Esophagus squamous epithelium (tissue), 5 donors: ENCODE measurements at regions of chr18 and their contacts with region 1.

Region 1: GRCh38 chr18:59459369-59460079 is 100.5 kb upstream of the LMAN1 start:
- DNase-seq: no peak
- H3K4me3 ChIP-seq: no peak overlapping the region
- H3K27ac ChIP-seq: no peak overlapping the region
- H3K4me1 ChIP-seq: peaks cover 0 to 6% (median 5%) of the 10 kb centered on the region in 3 donors
- H3K27me3 ChIP-seq: peaks cover 0 to 11% (median 0%) of the 10 kb centered on the region in 4 donors
- CTCF ChIP-seq: peak; percentile 16 to 73 (median 52)
- POLR2A ChIP-seq: no peak

Region 2: DNA sequence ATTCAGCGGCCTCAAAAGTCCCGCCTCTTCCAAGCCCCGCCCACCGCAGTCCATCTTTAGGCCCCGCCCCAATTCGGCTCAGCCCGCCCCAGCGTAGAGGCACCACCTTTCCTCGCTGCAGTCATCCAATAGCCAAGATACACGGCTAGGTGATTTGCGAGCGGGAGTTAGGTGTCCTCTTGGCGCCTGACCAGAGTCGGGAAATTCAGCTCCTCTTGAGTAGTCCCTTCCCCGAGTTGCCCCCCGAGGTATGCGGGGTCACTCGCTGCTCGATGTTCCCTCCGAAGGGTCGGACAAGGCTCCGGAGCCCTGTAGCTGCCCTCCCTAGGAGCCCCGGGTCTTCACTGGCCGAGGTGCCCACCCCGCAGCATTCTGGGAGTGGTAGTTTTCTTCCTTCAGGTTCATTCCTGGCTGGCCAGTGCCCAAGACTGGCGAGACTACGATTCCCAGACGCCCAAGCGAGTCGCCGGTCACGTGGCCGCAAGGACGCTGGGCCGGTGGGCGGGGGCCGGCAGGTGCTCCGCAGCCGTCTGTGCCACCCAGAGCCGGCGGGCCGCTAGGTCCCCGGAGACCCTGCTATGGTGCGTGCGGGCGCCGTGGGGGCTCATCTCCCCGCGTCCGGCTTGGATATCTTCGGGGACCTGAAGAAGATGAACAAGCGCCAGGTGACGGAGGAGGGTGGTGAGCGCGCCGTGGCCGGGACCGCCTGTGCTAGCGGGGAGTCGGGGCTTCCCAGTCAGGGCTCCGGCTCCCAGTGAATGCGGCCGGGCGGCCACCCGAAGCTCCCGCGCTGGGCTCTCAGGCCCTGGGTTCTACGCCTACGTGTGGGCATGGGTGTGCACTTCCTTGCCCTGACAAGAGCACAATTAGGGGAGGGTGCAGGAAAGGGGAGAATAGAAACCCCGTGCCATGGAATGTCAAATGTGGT is 319.9 kb before region 1 on chr18 and contains the start of gene SEC11C:
- intact Hi-C with region 1: no loop called
- DNase-seq: peak; percentile 78
- H3K4me3 ChIP-seq: peak within 1 kb of the TSS; percentile 83 to 94 (median 90)
- H3K27ac ChIP-seq: peak within 1 kb of the TSS; percentile 83 to 92 (median 86)
- H3K4me1 ChIP-seq: peaks cover 10 to 25% (median 14%) of the 10 kb centered on the region in 3 donors
- H3K27me3 ChIP-seq: peaks cover 0 to 10% (median 0%) of the 10 kb centered on the region in 4 donors
- CTCF ChIP-seq: no peak
- POLR2A ChIP-seq: peak in 1 of 4 donors; percentile 60
- total RNA-seq, gene SEC11C: 29.6 to 61.8 (median 31.7) TPM

Region 3: DNA sequence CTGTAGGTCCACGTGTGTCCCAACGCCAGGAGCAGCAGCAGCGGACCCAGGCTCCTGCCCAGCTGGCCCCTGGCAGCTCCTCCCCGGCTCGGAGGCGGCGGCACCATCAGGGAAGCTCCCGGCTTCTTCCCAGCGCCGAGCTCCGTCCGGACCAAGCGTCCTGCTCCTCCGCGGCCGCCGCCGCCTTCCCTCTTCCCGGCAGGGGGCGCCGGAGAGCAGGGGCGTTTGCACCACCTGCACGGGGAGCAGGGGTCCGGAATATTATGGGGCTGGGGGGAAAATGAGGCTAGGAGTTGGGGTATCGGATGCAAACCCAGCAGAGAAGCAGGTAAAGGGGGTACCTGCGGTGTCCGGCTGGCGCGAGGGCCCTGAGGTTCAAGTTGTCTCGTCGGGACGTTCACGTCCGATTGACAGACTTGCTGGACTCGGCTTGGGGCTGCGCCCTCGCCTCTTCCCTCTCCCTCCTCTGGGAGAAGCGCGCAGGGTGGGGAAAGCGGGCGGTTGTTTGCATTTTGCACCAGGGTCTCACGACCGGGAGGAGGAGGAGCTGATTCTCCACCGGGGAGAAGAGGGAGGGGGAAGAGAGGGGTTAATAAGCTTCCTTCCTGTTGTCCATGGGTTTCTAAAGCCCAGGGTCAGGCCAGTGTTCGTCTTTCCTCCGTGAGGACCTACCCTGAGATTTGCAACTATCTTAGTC is 237.9 kb after region 1 on chr18 and contains the start of gene CCBE1:
- intact Hi-C with region 1: loop called (anchors 10 kb)
- DNase-seq: no peak
- H3K4me3 ChIP-seq: peak within 1 kb of the TSS; percentile 37 to 70 (median 49)
- H3K27ac ChIP-seq: peak within 1 kb of the TSS in 3 of 4 donors; percentile 9 to 60 (median 30)
- H3K4me1 ChIP-seq: peaks cover 0 to 51% (median 17%) of the 10 kb centered on the region in 3 donors
- H3K27me3 ChIP-seq: peaks cover 0 to 56% (median 0%) of the 10 kb centered on the region in 4 donors
- CTCF ChIP-seq: peak; percentile 37 to 90 (median 76)
- POLR2A ChIP-seq: no peak
- total RNA-seq, gene CCBE1: 0.34 to 4.6 (median 1.3) TPM

Region 4: GRCh38 chr18:59718108-59718463 is 258.6 kb after region 1 on chr18:
- intact Hi-C with region 1: no loop called
- DNase-seq: no peak
- H3K4me3 ChIP-seq: no peak overlapping the region
- H3K27ac ChIP-seq: no peak overlapping the region
- H3K4me1 ChIP-seq: no peaks in the 10 kb centered on the region
- H3K27me3 ChIP-seq: peaks cover 0 to 6% (median 0%) of the 10 kb centered on the region in 4 donors
- CTCF ChIP-seq: no peak
- POLR2A ChIP-seq: no peak

Region 5: GRCh38 chr18:59823596-59824195 is 364.2 kb after region 1 on chr18:
- intact Hi-C with region 1: loop called (anchors 5 kb)
- DNase-seq: no peak
- H3K4me3 ChIP-seq: no peak overlapping the region
- H3K27ac ChIP-seq: no peak overlapping the region
- H3K4me1 ChIP-seq: no peaks in the 10 kb centered on the region
- H3K27me3 ChIP-seq: peaks cover 0 to 4% (median 0%) of the 10 kb centered on the region in 4 donors
- CTCF ChIP-seq: peak; percentile 43 to 84 (median 73)
- POLR2A ChIP-seq: no peak